ENCODE measurements at regions of chr5 and their contacts with region 1.

Region 1: DNA sequence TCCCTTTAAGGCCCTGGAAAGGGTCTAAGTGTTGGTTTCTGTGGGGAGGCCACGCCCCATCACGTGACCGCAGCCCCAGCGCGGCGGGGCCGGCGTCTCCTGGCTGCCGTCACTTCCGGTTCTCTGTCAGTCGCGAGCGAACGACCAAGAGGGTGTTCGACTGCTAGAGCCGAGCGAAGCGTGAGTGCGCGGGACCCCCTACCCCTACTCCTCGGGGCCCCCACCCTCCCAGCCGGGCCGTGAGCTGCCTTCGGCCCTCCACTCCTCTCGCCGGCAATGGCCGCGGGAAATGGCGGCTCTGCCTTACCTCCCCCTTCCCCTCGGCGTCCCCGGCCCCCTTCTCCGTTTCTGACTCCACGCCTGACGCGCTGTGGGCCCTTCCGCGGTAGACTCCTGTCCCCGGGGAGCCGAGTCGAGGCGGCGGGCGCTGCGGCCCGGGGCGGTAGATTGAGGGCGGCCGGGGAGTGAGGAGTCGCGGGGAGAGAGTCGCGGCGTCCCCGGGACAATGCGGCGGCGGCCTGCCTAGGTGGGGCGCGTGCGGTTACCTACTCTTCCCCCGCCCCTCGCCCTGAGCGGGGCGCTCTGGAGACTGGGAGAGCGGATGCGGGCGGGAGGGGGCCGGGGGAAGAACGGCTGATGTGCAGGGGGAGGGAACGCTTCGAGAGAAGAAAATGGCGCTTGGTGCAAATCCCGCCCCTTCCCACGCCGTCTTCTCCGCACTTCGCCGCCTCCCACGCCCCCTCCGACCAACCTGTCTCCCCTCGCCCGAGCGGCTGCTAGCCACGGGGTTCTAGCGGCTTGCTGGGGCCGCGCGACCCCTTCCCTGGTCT is at the start of gene SUB1:
- DNase-seq: peak; percentile 91
- CTCF ChIP-seq: no peak

Region 2: GRCh38 chr5:32489791-32490582 is 95.7 kb before region 1 on chr5:
- in situ Hi-C with region 1: loop called (anchors 5 kb)
- DNase-seq: peak; percentile 67
- CTCF ChIP-seq: peak; percentile 52

Region 3: GRCh38 chr5:32531885-32532520 is 53.7 kb before region 1 on chr5:
- in situ Hi-C with region 1: loop called (anchors 10 kb)
- DNase-seq: peak; percentile 53
- CTCF ChIP-seq: no peak

Region 4: DNA sequence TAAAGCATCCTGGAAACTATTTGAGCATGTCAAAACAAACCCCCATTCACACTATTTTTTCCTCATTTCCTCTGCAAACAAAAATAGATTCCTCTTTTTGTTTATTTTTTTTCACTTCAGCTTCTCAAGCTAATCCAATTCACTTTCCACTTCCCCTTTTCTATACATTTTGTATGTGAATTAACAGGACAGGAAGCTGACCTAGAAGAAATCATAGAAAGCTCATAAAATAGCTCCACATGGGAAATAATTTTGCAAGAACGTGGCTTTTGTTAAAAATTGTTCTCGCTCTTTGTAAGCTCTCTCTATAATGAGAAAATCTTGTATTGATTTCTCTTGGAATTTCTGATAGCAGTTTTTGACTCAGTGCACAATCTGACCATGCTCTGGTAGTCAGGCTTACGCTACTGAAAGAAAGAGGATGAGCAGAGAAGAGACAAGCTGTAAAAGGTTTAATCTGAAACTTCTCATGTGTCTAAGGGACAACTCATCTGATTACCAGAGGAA is 1090.3 kb after region 1 on chr5:
- in situ Hi-C with region 1: no loop called
- DNase-seq: peak; percentile 35
- CTCF ChIP-seq: no peak

Measured in GM13976 (cell line).